ENCODE measurements at regions of chr12 and their contacts with region 1.

Region 1: GRCh38 chr12:111444925-111445725 is 39.4 kb downstream of the SH2B3 start:
- DNase-seq: peak; percentile 70 to 87 (median 83)
- ATAC-seq: peak; percentile 64
- H3K4me3 ChIP-seq: no peak overlapping the region
- H3K27ac ChIP-seq: peak overlapping the region; percentile 31
- H3K4me1 ChIP-seq: peaks cover 24% of the 10 kb centered on the region
- H3K27me3 ChIP-seq: no peaks in the 10 kb centered on the region

Region 2: GRCh38 chr12:111313833-111314259 is 131.3 kb before region 1 on chr12:
- intact Hi-C with region 1: no loop called
- DNase-seq: peak; percentile 73 to 87 (median 84)
- ATAC-seq: peak; percentile 54 to 70
- H3K4me3 ChIP-seq: no peak overlapping the region
- H3K27ac ChIP-seq: no peak overlapping the region
- H3K4me1 ChIP-seq: no peaks in the 10 kb centered on the region
- H3K27me3 ChIP-seq: no peaks in the 10 kb centered on the region

Region 3: DNA sequence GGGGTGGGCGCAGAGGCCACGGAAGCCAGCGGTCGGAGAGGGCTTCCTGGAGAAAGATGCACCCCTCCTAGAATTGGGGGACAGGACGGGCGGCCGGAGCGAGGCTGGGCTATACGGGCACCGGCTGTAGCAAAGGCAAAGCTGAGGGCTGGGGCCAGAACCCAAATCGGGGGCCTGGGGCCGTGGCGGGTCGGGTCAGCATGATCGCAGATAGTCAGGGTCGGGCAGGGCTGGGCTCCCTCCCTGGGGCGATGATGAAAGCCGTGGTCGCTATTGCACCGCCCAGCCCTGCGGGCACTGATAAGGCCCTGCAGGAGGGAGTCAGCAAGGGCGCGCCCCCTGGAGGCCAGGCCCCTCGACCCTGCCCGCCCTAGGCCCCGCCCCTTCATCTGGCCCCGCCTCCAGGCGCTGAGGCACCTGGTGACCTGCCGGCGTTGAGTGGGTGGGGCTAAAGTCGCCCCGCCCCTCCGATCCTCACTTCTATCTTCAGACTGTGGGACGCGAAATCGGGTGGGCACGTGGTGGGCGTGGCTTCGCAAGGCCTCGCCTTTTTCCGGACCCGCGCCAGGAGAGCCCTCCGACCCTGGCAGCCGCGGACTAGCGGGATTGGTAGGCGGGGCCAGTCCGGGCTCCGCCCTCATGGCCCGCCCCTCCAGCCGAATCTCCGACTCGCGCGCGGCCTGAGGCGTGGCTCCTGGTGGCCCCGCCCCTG is 39.8 kb before region 1 on chr12:
- intact Hi-C with region 1: loop called in 1 of 4 experiments (anchors 5 kb)
- DNase-seq: peak; percentile 95 to 98 (median 97)
- ATAC-seq: peak; percentile 85 to 90
- H3K4me3 ChIP-seq: peak overlapping the region; percentile 79
- H3K27ac ChIP-seq: peak overlapping the region; percentile 4
- H3K4me1 ChIP-seq: peaks cover 20% of the 10 kb centered on the region
- H3K27me3 ChIP-seq: no peaks in the 10 kb centered on the region

Region 4: GRCh38 chr12:111532741-111533140 is 87.6 kb after region 1 on chr12:
- intact Hi-C with region 1: no loop called
- DNase-seq: no peak
- ATAC-seq: no peak
- H3K4me3 ChIP-seq: no peak overlapping the region
- H3K27ac ChIP-seq: no peak overlapping the region
- H3K4me1 ChIP-seq: no peaks in the 10 kb centered on the region
- H3K27me3 ChIP-seq: no peaks in the 10 kb centered on the region

Measured in right cardiac atrium (tissue), 5 donors.